Activated CD4-positive, alpha-beta T cell treated with anti-CD3 and anti-CD28 coated beads, Interleukin-2, amount 10 ng/mL, durations not matched to agents 24 days and 14 days (primary cell): ENCODE measurements at regions of chr10 and their contacts with region 1.

Region 1: DNA sequence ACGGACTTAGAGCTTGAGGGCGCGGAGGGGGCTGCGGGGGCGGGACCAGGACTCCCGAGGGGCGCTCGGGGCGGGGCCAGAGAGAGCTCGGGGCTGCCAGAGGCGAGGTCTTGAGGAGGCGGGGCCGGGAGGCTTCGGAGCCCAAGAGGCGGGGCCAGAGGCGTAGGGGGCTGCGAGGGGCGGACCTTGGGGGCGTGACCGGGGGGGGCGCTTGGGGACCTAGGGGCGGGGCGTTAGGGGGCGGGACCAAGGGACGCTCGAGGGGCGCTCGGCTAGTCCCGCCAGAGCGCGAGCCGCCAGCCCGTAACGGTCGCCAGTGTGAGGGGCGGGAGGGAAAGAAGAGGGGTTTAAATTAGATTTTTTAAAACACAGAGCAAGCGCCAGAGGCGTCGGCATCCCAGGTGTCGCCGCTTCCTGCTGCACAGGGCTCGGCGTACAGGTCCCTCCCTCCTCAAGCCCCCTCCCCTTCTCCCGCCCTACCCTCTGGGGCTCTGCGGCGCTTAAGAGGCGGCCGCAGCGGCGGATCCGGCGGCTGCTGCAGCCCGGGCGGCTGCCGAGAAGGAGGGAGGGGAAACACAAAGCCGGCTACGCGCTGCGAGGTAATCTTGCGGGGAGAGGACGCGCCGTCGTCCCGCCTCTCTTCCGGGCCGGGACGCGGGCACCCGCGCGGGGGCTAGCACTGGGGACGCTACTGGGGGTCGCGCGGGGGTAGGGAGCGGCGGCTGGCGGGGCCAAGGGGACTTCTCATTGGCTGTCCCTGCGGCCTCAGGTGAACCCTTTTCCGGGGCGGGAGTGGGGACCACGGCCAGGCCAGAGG is at the start of gene ADD3:
- DNase-seq: peak; percentile 95
- H3K4me3 Mint-ChIP-seq: no peak within 1 kb of the TSS
- H3K27ac Mint-ChIP-seq: peak within 1 kb of the TSS; percentile 94
- H3K4me1 Mint-ChIP-seq: peaks cover 40% of the 10 kb centered on the region
- H3K27me3 Mint-ChIP-seq: peaks cover 4% of the 10 kb centered on the region
- total RNA-seq, gene ADD3: 28.4 and 28.9 TPM in 2 replicates

Region 2: DNA sequence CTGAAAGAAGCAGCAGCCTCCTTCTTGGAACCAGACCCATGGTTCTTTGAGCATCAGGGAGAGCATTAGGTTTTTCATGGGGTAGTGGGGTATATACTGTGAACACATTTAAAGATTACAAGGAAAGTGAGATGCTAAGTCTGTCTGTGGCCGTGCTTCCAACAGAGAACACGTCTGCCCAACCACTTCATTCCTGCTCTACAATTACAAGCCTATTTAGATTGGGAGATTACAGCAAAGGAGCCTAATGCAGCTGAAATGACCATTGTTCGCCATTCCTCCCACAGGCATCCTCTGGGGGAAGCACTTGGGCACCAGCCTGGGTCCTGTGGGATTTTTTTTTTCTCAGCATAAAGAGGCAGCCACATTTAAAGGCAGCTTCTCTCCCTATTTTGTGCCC is 621.0 kb before region 1 on chr10:
- intact Hi-C with region 1: no loop called
- DNase-seq: no peak
- H3K4me3 Mint-ChIP-seq: no peak overlapping the region
- H3K27ac Mint-ChIP-seq: no peak overlapping the region
- H3K4me1 Mint-ChIP-seq: no peaks in the 10 kb centered on the region
- H3K27me3 Mint-ChIP-seq: no peaks in the 10 kb centered on the region

Region 3: DNA sequence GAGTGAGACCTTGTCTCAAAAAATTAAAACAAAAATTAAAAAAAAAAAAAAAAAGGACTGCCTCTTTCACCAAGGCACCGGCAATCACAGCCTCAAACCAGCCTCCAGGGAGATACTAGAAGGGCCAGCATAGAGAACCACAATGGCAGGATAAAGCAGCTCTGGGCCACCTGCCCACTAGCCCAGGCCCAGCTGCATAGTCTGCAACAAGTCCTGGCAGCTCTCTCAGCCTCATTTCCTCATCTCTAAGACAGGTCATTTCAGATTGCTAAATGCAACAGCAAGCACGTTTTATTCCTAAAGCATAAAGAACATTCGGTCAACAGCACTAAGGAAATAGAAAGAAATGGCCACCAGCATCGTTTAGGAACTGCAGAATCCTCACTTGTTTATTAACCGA is 113.4 kb before region 1 on chr10:
- intact Hi-C with region 1: loop called (anchors 5 kb)
- DNase-seq: no peak
- H3K4me3 Mint-ChIP-seq: no peak overlapping the region
- H3K27ac Mint-ChIP-seq: no peak overlapping the region
- H3K4me1 Mint-ChIP-seq: peaks cover 50% of the 10 kb centered on the region
- H3K27me3 Mint-ChIP-seq: no peaks in the 10 kb centered on the region

Region 4: DNA sequence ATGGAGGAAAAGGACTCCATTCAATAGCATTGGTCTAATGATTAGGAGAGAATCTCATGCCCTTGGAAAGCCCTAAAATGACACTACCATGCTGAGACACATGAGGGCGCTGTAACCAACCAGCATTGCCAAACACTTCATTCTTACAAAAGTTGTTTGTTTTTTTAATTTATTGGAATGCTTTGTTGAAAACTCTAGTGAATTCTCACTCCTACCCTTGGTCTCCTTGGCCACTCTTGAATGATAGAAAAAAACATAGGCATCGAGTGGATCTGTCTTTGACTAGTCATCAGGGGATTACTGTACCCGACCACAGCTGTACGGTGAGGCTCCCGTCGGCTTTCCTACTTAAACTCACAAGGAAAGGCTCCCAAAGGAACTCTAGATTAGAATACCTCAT is 29.4 kb before region 1 on chr10:
- intact Hi-C with region 1: loop called (anchors 2 kb)
- DNase-seq: peak; percentile 89
- H3K4me3 Mint-ChIP-seq: no peak overlapping the region
- H3K27ac Mint-ChIP-seq: no peak overlapping the region
- H3K4me1 Mint-ChIP-seq: peaks cover 2% of the 10 kb centered on the region
- H3K27me3 Mint-ChIP-seq: peaks cover 10% of the 10 kb centered on the region

Region 5: DNA sequence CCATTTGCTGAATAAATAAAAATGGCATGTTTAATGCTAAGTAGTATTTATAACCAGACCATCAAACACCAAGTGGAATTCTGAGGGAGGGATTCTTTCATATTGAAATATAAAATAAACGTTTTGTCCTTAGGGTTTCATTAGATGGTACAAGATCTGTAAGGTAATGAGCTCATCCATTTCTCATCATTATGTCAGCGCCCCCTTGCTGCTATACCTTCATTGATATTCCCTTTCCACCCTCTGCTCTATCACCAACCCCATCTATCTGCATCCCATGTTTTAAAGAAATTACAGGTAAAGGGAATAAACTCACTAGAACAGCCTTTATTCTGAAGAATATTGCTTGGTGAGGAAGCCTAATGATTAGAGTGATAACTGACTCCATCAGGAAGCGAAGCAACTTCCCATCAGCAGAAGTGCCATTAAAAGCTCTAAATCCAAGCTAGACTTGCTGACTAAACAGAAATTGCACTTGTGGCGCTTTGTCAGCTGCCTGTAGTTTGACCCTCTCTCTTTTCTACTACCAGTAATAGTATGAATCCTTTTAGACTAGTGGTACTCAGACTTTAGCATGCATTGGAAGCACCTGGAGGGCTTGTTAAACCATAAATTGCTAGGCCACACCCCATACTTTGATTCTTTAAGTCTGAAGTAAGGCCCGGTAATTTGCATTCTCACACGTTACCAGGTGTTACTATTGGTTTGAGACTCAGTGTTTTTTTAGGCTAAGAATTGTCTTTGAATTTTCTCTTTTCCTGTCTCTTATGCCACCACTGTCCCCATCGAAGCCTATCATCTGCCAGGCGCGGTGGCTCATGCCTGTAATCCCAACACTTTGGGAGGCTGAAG is 27.4 kb after region 1 on chr10:
- intact Hi-C with region 1: loop called (anchors 2 kb)
- DNase-seq: no peak
- H3K4me3 Mint-ChIP-seq: no peak overlapping the region
- H3K27ac Mint-ChIP-seq: no peak overlapping the region
- H3K4me1 Mint-ChIP-seq: peaks cover 37% of the 10 kb centered on the region
- H3K27me3 Mint-ChIP-seq: no peaks in the 10 kb centered on the region

Region 6: DNA sequence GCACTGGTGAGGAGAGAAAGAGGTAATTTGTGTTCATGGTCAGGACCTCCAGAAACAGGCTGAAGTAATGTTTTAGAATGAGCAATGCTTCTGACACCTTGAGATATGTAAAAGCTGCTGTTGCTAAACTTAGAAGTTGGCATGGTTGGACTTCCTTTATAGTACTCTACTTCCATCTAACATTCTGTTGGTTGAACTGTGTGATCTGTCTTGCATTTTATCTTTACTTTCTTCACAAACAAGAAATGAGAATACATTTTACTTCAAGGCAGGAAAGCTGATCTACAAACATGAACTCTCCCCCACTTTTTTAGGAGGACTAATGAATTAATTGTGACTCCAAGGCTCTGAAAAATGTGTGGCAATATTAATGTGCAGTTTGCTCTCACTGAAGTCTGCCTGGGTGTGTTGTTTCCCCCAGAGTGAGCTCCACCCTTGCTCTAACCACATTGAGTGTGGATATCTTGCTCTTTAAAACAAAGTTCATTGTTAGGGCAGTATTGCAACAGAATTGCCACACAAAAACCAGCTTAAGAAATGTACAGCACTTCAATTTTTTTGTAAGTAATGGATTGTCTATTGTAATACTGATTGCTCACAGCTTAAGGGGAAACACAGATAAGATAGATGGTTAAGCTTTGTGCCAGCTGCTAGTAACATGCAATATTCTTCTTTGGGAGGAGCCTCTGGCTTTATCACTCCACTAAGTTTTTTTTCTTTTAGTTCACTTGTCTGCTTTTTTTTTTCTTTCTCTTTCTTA is 68.8 kb after region 1 on chr10:
- intact Hi-C with region 1: loop called (anchors 2 kb)
- DNase-seq: peak; percentile 82
- H3K4me3 Mint-ChIP-seq: peak overlapping the region; percentile 85
- H3K27ac Mint-ChIP-seq: peak overlapping the region; percentile 95
- H3K4me1 Mint-ChIP-seq: peaks cover 77% of the 10 kb centered on the region
- H3K27me3 Mint-ChIP-seq: no peaks in the 10 kb centered on the region

Region 7: DNA sequence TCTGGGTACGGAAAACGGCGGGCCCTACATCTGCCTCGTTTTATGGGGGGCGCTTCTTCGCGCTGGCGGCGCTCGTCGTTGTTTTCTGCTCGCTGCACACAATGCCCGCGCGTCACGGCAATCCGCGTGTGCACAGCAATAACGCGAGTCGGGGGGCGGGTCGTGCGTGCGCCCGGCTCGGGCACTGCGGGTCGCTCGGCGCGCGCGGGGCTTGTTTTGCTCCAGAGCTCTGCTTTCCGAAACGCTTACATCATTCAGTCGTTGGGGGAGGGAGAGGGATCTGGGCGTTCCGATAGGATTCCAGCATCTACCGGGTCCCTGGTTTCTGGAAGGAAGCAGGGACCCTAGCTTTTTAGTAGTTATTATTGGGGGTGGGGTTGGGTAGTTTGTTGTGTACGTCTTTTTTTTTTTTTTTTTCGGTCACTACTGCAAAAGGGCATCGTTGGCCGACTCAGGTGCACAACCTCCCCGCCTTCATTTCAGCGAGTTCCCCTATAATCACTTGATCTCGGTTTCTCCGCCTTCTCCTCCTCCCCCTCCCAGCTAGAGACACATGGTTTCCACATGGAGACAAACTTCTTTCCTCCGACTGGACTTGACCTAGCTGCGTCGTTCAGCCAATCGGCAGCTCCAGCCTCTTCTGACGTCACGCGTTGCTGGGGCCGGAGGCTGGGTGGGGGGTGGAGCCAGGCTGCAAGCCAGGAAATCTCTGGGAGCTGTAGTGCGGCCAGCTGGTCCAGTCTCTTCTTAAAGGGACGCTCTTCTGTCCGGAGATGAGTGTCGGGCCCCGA is 203.0 kb after region 1 on chr10:
- intact Hi-C with region 1: loop called (anchors 5 kb)
- DNase-seq: peak; percentile 98
- H3K4me3 Mint-ChIP-seq: peak overlapping the region; percentile 91
- H3K27ac Mint-ChIP-seq: peak overlapping the region; percentile 98
- H3K4me1 Mint-ChIP-seq: peaks cover 68% of the 10 kb centered on the region
- H3K27me3 Mint-ChIP-seq: peaks cover 8% of the 10 kb centered on the region

Region 8: GRCh38 chr10:110481934-110482333 is 474.0 kb after region 1 on chr10:
- intact Hi-C with region 1: no loop called
- DNase-seq: no peak
- H3K4me3 Mint-ChIP-seq: no peak overlapping the region
- H3K27ac Mint-ChIP-seq: no peak overlapping the region
- H3K4me1 Mint-ChIP-seq: peaks cover 4% of the 10 kb centered on the region
- H3K27me3 Mint-ChIP-seq: peaks cover 4% of the 10 kb centered on the region